AG04449 (cell line): ENCODE measurements at regions of chr19 and their contacts with region 1.

Region 1: DNA sequence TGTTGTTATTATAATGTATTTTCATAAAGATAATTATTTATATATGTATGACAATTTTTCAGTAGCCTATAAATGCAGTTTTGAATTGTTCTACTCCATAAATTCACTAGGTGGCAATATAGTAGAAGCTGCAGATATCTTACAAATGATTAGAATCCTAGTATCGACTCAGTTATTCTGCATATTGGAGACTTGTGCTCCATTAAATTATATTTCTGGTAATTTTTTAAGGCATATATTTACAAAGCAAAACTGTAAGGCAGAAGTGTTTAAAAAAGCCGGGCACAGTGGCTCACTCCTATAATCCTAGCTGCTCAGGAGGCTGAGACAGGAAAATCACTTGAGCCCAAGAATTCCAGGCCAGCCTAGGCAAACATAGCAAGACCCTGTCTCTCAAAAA is 58.7 kb downstream of the DPY19L3 start:
- DNase-seq: no peak
- H3K4me3 ChIP-seq: no peak overlapping the region
- CTCF ChIP-seq: no peak

Region 2: GRCh38 chr19:32475141-32476031 is 11.1 kb after region 1 on chr19:
- CTCF ChIA-PET with region 1: interaction called, 21 read pairs
- POLR2A ChIA-PET with region 1: no interaction called
- DNase-seq: no peak
- H3K4me3 ChIP-seq: no peak overlapping the region
- CTCF ChIP-seq: no peak